T-cell (primary cell): ENCODE measurements at regions of chr6 and their contacts with region 1.

Region 1: DNA sequence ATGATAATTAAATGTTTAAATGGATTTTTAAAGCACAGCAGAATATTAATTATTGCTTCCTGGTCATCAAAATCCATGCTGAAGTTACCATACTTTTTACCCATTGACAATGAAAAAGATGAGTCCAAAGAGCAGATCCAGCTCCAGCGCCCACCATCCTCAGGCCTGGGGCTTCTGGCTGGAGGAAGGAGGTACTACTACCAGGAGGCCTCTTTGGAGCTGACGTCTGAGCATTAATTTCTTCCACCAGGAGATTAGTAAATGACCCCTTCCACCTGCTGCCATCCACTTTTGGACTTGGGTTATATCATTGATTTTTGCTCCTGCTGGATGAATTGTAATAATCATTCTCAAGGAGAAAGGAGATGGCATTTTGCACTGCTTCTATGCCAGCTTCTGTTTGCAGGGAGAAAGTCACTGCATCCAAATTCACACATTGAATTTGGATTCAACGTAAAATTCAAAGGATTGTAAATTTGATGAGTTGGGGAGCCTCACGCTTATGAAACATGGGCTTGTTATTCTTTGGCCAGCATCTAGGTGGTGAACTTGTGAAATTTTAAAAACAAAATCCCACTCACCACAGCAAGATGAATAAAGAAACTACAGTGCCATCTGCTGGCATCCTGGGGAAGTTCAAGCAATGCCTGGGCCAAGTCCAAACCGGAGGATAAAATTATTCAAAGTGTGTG is 121.8 kb downstream of the SASH1 start:
- DNase-seq: peak in 29 of 35 experiments; percentile 2 to 63 (median 27)
- ATAC-seq: peak in 2 of 4 experiments; percentile 37 to 43
- H3K4me3 ChIP-seq: no peak overlapping the region
- H3K4me3 Mint-ChIP-seq: no peak overlapping the region
- H3K27ac ChIP-seq: no peak overlapping the region
- H3K27ac Mint-ChIP-seq: no peak overlapping the region
- H3K4me1 ChIP-seq: no peaks in the 10 kb centered on the region
- H3K4me1 Mint-ChIP-seq: peaks cover 0 to 8% (median 0%) of the 10 kb centered on the region in 3 donors
- H3K27me3 ChIP-seq: peaks cover 0 to 9% of the 10 kb centered on the region in 2 experiments
- H3K27me3 Mint-ChIP-seq: peaks cover 8 to 12% of the 10 kb centered on the region in 2 donors

Region 2: DNA sequence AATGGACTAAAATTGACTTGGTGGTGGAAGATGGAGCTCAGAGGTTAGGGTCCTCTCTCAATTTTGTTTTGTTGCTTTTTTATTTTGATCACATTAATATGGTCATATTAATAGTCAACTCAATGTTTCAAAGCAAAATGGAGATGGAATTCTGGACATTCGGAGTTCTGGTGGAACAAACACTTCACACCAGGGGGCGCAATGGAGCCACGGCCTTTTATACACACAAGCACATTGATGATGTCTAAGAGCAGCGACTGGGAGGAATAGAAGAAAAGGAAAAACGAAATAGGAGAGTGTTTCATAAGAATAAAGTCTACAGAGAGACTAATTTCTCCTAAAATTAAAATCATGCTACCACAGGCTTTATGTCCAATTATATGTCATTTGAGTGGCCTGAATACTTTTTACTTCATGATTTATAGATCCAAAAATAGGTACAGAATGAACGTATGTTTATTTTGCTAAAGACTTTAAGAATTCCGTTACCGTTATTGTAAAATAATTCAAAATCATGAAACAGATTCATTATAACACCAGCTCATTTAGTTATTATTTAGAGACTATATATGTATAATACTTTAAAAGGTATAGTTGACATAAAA is 319.4 kb before region 1 on chr6:
- CTCF ChIA-PET with region 1: interaction called, 3 to 11 read pairs
- POLR2A ChIA-PET with region 1: no interaction called
- DNase-seq: peak in 27 of 35 experiments; percentile 3 to 65 (median 28)
- ATAC-seq: no peak
- H3K4me3 ChIP-seq: no peak overlapping the region
- H3K4me3 Mint-ChIP-seq: no peak overlapping the region
- H3K27ac ChIP-seq: no peak overlapping the region
- H3K27ac Mint-ChIP-seq: no peak overlapping the region
- H3K4me1 ChIP-seq: peaks cover 0 to 9% of the 10 kb centered on the region in 2 experiments
- H3K4me1 Mint-ChIP-seq: peaks cover 7 to 16% (median 13%) of the 10 kb centered on the region in 3 donors
- H3K27me3 ChIP-seq: no peaks in the 10 kb centered on the region
- H3K27me3 Mint-ChIP-seq: peaks cover 7 to 12% of the 10 kb centered on the region in 2 donors